ENCODE measurements at regions of chr16 and their contacts with region 1.

Region 1: DNA sequence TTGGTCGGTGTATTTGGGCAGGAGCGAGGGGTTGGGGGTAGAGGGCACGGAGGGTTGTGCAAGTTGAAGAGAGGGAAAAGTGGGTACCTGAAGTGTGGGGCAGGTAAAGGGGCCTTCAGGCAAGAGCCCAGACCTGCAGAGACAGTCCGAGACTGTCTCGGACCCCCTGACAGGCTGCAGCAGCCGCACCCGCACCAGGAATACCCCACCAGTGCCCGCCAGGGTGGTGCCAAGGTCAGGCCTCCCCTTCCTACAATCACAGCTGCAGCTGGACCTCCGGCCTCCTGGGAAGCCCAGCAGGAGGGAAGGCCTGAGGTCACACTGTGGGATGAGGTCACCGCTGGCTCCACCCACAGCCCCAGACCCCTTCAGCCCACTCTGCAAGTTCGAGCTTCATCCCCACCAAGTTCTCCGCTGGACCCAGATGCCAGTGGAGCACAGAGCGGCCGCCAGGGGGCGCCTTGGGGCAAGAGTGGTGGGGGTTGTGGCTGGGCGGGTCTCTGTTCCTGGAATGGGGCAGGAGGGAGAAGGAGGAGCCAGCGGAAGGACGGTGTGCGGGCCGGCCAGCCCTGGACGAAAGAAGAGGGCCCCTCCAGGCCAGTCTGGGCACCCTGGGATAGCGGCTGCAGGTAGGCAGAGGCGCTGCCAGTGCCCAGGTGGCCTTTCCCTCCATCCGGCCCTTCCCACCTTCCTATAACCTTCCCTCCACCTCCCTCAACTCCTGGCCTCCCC is at the start of gene HSD3B7:
- DNase-seq: peak; percentile 64 to 97 (median 88)

Region 2: DNA sequence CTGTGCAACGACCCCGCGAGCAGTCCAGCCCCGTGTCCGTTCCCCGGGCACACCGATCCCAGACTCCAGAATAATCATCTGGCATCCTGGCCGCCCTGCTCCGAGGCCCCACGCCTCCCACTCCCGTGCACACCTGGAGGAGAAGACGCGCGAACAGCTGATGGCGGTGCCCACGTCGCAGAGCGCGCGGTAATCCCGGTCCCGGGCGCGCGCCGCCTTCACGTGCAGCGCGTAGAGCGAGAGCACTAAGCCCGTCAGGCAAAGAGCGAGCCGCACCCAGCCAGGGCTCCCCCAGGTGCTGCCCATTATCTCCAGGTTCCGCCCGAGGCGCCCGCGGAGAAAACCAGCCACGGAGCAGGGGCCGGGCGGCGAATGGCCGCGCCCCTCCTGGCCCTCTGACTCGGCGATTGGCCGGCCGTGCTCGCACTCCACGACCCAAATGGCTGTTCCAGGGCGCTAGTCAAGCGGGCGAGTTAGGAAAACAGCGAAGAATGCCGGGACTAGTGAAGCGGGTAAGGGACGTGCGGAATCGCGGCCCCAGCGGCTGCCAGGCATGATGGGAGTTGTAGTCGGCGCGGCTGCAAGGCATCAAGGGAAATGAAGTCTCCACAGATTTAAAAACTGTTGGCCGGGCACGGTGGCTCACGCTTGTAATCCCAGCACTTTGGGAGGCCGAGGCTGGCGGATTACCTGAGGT is 109.7 kb after region 1 on chr16 and contains the start of gene VKORC1:
- intact Hi-C with region 1: loop called (anchors 5 kb)
- DNase-seq: peak; percentile 90 to 99 (median 94)

Region 3: GRCh38 chr16:31441956-31442355 is 457.1 kb after region 1 on chr16:
- intact Hi-C with region 1: loop called (anchors 2 kb)
- DNase-seq: peak in 3 of 10 donors; percentile 70 to 89 (median 85)

Region 4: DNA sequence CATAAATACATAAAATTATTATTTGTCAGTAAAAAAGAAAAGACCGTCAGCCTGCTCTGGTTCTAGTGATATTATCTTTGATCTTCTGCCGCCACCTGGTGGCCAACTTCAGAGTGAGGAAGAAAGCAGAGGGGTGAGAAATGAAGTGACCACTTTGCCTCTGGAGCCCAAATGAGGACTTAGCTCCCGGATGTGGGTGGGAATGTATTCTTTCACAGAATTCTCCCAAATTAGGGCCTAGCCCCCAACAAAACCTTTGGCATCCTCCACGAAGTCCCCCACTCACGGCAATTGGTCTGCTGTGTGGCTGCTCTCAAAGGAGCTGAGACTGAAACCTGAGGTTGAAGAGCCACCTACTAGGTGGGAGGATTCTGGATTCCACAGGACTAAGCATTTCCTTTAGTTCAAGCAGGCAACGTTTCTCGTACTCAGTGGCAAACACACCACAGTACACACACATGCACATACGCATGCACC is 883.9 kb after region 1 on chr16:
- intact Hi-C with region 1: loop called (anchors 1 kb)
- DNase-seq: peak in 9 of 10 donors; percentile 46 to 92 (median 81)

Measured in posterior cingulate gyrus (tissue), 11 donors.